Astrocyte of the cerebellum (primary cell): ENCODE measurements at regions of chr12 and their contacts with region 1.

Region 1: GRCh38 chr12:50103767-50104321 is at the start of gene GPD1:
- DNase-seq: no peak
- H3K4me3 ChIP-seq: no peak within 1 kb of the TSS
- CTCF ChIP-seq: peak; percentile 6

Region 2: DNA sequence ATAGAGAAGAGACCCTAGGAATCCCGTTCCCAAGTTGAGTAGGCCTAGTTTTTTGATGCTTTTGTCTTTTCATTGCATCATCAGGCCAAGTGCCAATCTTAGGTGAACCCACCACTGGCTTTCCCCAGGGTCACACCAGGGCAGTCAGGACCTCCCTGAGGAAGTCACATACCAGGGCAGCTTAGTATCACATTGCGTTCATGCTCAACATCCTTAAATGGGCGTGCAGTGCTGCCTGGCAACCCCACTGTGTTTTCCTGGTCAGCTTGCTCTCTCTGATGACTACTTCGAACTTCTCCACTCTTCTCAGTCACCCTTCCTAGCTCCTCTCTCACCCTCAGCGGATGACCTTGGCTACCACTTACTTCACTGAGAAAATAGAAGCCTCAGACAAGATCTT is 37.4 kb before region 1 on chr12:
- in situ Hi-C with region 1: loop called (anchors 5 kb)
- DNase-seq: no peak
- H3K4me3 ChIP-seq: no peak overlapping the region
- CTCF ChIP-seq: no peak

Region 3: DNA sequence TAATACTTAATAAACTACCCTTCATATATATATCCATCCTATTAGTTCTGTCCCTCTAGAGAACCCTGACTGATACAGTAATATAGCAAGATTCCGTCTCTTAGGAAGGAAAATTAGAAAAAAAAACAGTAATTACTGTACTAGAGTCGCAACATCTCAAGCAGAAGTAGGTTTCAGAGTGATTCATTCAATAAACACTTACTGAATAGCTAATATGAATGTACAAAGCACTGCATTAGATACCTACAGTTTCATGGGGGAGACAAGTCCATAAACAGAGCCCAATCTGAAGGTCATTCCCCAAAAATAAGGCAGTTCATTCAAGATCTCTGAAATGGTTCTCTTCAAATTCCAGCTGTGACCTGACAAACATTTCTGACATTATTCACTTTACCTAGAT is 53.4 kb after region 1 on chr12:
- in situ Hi-C with region 1: loop called (anchors 5 kb)
- DNase-seq: no peak
- H3K4me3 ChIP-seq: no peak overlapping the region
- CTCF ChIP-seq: no peak